A549 (cell line): ENCODE measurements at regions of chr2 and their contacts with region 1.

Region 1: DNA sequence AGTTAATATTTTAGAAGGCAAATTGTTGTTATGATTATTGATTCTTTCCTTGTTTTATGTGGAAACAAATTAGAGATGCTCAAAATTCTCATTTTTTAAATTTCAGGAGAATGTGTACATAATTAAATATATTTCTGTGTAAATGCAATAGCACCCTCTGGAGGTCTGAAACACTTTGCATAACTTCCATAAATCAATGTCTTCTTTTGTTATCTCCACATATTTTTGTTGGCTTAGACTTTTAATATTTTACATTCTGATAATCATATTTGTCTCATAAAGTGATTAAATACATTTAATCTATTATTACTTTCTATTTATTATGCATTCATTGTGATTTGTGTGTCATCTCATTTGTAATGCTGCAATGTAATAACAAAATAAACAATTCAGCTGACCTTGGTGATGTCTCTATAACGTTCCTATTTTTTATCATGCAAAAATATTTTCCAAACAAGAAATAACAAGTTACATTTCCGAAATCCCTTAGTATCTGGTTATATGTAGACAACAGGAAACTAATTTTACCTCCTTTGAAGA is 201.8 kb upstream of the GALNT5 start:
- DNase-seq: peak in 1 of 2 experiments; percentile 48
- ATAC-seq: no peak
- H3K4me3 ChIP-seq: no peak overlapping the region
- H3K27ac ChIP-seq: peak overlapping the region; percentile 35 to 72; a peak in 5 of 6 replicates
- H3K4me1 ChIP-seq: peaks cover 49% of the 10 kb centered on the region
- CTCF ChIP-seq: peak; percentile 67; the same call in 2 of the 3 replicates
- EP300 ChIP-seq: no peak
- POLR2A ChIP-seq: no peak
- RAD21 ChIP-seq: peak; percentile 73 to 83

Region 2: DNA sequence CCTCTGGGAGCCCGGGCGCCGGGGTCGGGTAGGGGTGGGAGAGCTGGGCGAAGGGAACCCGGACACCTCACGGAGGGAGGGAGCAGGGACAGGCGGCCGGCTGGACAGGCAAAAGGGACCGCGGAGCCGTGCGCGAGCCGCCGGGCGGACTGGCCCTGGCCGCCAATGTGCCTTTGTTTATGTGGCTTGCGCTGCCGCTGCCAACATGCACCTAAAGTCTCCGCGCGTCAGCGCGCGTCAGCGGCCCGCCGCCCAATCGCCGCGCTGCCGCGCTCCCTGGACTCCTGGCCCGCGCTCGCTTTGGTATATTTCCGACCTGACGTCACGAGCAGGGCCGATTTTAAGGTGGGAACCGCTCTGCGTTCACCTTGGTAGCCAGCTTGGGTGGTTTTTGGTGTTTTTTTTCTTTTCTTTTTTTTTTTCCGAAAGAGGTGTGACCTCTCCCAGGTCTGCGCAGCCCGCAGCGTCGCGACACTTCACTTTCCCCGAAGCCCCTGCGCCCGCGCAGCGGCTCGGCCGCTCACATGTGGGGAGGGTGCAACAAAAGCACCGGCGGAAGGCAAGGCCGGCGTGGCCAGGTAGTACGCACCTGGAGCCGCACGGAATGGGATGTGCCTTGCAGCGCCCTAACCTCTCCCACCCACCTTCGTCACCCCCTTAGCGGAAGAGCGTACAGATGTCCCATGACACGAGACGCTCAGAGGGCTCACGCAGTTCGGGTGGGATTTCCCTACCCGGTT is 723.0 kb before region 1 on chr2 and contains the start of gene NR4A2:
- CTCF ChIA-PET with region 1: interaction called, 3 read pairs
- POLR2A ChIA-PET with region 1: interaction called, 13 read pairs
- DNase-seq: peak; percentile 80 to 93
- ATAC-seq: peak; percentile 69 to 82
- H3K4me3 ChIP-seq: peak within 1 kb of the TSS; percentile 87
- H3K27ac ChIP-seq: peak within 1 kb of the TSS; percentile 98
- H3K4me1 ChIP-seq: peaks cover 30% of the 10 kb centered on the region
- CTCF ChIP-seq: no peak
- EP300 ChIP-seq: no peak
- POLR2A ChIP-seq: peak; percentile 66
- RAD21 ChIP-seq: no peak
- polyA plus RNA-seq, gene NR4A2: 7.3 and 9.7 TPM in 2 replicates